Testis (tissue), 5 donors: ENCODE measurements at regions of chr7 and their contacts with region 1.

Region 1: DNA sequence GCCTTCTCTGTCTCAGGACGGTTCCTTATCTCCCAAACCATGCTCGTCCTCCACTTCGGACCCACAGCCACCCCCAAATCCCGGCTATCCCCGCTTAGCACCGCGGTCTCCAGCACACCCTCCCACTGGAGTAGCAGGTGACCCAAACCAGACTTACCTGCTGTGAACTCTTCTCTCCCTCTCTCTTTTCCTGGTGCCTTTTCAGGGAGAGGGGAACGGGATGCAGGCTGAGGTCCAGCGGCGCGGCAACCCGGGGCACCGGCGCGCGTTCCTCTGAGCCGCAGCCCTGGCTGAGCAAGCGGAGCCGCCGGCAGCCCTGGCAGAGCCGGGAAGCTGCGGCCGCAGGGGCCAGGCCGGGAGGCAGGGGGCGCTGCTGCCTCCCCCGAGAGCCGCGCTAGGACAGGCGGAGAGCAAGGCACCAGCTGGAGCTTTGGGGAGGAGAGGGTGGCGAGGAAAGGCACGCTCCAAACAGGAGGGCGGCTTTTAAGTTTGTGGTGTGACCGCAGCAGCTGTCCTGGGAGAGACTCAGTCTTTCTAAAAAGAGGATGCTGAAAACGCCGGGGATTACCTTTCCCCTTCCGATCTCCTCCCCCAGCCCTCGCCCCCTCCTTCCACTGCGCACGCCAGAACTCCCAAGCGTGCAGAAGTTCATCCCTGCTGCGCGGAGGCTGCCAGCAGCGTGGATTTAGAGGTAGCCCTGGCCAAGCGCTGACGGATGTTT is at the start of gene SEMA3D:
- DNase-seq: peak; percentile 83
- H3K4me3 ChIP-seq: peak within 1 kb of the TSS; percentile 64 to 75
- H3K27ac ChIP-seq: peak within 1 kb of the TSS; percentile 61 to 79
- H3K4me1 ChIP-seq: peaks cover 4% of the 10 kb centered on the region
- H3K27me3 ChIP-seq: no peaks in the 10 kb centered on the region
- CTCF ChIP-seq: peak; percentile 59 to 84 (median 76)
- POLR2A ChIP-seq: no peak
- total RNA-seq, gene SEMA3D: 7.5 to 11.5 TPM

Region 2: DNA sequence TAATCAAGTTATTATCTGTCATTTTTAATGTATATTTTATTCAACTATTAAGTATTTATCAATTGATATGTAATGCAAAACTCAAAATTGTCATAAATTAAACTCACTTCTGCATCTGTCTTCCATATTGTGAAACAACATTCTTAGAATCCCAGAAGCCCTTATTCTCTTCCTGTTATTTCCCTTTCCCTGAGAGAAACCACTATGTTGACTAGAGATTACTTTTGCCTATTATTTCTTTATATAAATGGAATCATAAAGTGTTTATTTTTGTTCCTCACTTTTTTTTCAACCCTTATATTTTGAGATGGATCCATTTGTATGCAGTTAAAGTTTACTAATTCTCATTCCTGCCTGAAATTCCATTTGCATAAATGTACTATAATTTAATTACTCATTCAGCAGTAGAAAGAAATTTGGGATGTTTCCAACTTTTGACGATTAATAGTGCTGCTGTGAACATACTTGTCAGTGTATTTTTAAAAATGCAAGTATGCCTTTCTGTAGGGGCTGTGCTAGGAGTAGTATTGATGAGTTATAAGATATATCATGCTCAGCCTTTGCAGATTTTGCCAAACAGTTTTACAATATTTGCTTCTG is 211.0 kb before region 1 on chr7:
- intact Hi-C with region 1: no loop called
- DNase-seq: no peak
- H3K4me3 ChIP-seq: no peak overlapping the region
- H3K27ac ChIP-seq: no peak overlapping the region
- H3K4me1 ChIP-seq: peaks cover 9% of the 10 kb centered on the region
- H3K27me3 ChIP-seq: no peaks in the 10 kb centered on the region
- CTCF ChIP-seq: no peak
- POLR2A ChIP-seq: no peak

Region 3: DNA sequence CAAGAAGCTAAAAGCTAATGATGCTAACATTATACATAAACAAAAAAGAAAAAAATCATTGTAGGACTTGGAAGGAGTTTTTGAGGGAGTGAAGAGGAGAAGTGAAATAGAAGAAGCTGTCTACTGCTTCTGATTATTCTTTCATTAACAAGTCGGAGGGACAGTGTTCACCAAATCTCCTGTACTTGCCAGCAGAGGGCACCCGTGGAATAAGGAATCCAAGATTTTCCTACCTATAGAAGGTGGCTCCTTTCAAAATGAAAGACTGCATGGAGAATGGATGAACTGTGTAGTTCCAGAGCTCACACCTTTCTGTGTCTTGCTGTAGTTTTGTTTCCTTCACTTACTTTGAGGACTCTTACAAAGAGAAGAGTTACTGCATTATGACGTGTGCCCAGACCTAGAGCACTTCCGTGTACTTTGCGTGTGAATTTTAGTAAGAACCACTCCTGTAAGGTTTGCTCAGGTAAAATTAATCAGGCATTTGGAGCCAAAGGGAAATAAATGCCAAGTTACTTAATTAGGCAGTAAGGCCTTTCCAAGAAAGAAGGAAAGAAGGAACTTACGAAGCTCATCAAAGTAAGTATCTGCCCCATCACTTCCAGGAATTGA is 145.0 kb before region 1 on chr7:
- intact Hi-C with region 1: loop called (anchors 5 kb)
- DNase-seq: peak; percentile 84
- H3K4me3 ChIP-seq: no peak overlapping the region
- H3K27ac ChIP-seq: no peak overlapping the region
- H3K4me1 ChIP-seq: no peaks in the 10 kb centered on the region
- H3K27me3 ChIP-seq: no peaks in the 10 kb centered on the region
- CTCF ChIP-seq: peak; percentile 55 to 64 (median 63)
- POLR2A ChIP-seq: no peak

Region 4: GRCh38 chr7:85324145-85324799 is 137.6 kb after region 1 on chr7:
- intact Hi-C with region 1: no loop called
- DNase-seq: no peak
- H3K4me3 ChIP-seq: no peak overlapping the region
- H3K27ac ChIP-seq: no peak overlapping the region
- H3K4me1 ChIP-seq: no peaks in the 10 kb centered on the region
- H3K27me3 ChIP-seq: no peaks in the 10 kb centered on the region
- CTCF ChIP-seq: no peak
- POLR2A ChIP-seq: no peak

Region 5: DNA sequence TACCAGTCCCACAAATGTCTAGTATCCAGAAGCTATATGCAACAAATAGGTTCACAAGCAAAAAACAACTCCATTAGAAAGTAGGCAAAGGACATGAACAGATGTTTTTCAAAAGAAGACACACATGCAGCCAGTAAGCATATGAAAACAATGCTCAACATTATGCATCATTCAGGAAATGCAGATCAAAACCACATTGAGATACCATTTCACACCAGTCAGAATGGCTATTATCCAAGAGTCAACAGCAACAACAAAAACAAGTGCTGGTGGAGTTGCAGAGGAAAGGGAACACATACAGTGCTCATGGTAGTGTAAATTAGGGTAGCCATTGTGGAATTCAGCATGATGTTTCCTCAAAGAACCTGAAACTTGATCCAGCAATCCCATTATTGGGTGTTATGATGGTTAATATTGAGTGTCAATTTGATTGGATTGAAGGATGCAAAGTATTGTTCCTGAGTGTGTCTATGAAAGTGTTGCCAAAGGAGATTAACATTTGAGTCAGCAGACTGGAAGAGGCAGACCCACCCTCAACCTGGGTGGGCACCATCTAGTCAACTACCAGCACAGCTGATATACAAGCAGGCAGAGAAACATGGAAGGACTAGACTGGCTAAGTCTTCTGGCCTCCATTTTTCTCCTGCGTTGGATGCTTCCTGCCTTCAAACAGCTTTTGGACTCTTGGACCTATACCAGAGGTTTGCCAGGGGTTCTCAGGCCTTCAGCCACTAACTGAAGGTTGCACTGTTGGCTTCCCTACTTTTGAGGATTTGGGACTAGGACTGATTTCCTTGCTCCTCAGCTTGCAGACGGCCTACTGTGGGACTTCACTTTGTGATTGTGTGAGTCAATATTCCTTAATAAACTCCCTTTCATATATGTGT is 218.6 kb after region 1 on chr7:
- intact Hi-C with region 1: no loop called
- DNase-seq: no peak
- H3K4me3 ChIP-seq: no peak overlapping the region
- H3K27ac ChIP-seq: no peak overlapping the region
- H3K4me1 ChIP-seq: no peaks in the 10 kb centered on the region
- H3K27me3 ChIP-seq: no peaks in the 10 kb centered on the region
- CTCF ChIP-seq: no peak
- POLR2A ChIP-seq: no peak